Aorta (tissue), 5 donors: ENCODE measurements at regions of chr2 and their contacts with region 1.

Region 1: GRCh38 chr2:231604685-231605606 is 12.3 kb downstream of the TEX44 start:
- DNase-seq: peak; percentile 99 to 100
- ATAC-seq: peak; percentile 95
- H3K4me3 ChIP-seq: peak overlapping the region in 1 of 2 donors; percentile 16
- H3K27ac ChIP-seq: peak overlapping the region; percentile 95 to 97
- H3K4me1 ChIP-seq: no peaks in the 10 kb centered on the region
- H3K27me3 ChIP-seq: no peaks in the 10 kb centered on the region

Region 2: GRCh38 chr2:231514951-231515297 is 90.0 kb before region 1 on chr2:
- intact Hi-C with region 1: loop called (anchors 5 kb)
- DNase-seq: peak in 1 of 2 donors; percentile 3
- ATAC-seq: no peak
- H3K4me3 ChIP-seq: peak overlapping the region; percentile 59 to 71
- H3K27ac ChIP-seq: peak overlapping the region in 1 of 2 donors; percentile 68
- H3K4me1 ChIP-seq: no peaks in the 10 kb centered on the region
- H3K27me3 ChIP-seq: no peaks in the 10 kb centered on the region

Region 3: DNA sequence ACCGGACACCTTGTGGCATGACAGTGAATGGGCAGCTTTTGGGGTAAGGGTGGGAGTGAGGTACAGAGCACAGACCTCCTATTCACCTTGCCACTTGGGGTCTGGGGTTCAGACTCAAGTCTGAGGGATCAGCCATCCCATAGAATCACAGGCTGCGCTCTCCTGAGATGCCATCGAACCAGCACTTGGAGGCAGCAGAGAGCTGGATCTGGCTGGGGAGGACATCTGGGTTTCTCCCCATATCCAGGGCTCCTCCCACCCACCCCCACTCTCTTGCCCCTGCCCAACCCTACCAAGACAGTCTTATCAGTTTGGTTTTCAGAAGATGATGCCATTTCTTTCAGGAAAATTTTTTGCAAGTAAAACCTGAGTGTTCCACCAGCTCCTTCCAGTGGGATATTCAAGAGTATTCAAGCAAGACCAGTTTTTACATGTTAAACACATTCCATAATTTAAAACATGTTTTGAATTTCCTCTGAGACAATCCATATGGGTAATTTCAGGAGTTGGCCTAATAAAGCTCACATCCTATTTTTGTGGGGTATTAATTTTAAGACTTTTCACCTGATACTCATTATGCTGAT is 41.5 kb before region 1 on chr2:
- intact Hi-C with region 1: loop called (anchors 1 to 2 kb)
- DNase-seq: peak; percentile 60 to 79
- ATAC-seq: peak; percentile 46
- H3K4me3 ChIP-seq: no peak overlapping the region
- H3K27ac ChIP-seq: no peak overlapping the region
- H3K4me1 ChIP-seq: no peaks in the 10 kb centered on the region
- H3K27me3 ChIP-seq: no peaks in the 10 kb centered on the region

Region 4: DNA sequence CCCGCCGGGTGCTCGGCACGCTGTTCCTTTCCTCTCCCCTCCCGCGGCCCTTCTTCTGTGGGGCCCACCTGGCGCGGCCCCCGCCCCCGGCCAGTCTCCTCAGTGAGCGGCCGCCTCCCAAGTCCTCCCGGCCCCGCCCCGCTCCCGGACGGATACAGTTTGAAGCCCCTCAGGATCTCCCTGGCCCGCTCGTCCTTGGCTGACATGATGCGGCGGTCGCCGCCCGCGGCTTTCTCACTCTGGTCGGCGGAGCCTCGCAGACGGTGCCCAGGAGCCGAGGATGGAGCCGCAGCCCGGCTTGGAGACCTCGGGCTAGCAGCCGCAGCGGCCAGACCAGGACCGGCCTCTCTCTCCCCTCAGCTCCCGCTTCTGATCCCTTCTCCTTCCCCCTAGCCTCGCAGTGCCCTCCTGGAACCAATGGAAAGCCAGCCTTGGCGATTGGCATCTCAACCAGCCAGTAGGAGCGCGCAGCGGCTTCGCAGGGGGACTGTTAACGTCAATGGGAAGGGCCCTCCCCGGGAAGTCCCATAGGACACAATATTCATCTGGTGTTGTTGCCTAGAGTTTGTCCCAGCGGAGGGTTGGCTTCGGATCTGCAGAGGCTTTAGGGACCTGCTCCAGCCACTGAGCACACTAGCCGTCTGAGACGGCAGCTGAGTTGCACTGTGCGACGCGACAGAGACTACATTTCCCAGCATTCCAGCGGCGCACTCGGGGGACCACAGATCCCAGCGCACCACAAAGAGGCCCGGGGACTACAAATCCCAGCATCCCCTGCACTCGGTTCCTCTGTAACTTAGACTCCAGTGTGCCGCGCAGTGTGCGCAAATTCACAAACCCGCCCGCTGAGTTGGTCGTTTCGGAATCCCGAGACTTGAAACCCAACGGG is 176.2 kb after region 1 on chr2 and contains the start of gene PDE6D:
- intact Hi-C with region 1: loop called (anchors 5 to 10 kb)
- DNase-seq: peak; percentile 99
- ATAC-seq: peak; percentile 98
- H3K4me3 ChIP-seq: peak within 1 kb of the TSS; percentile 86 to 93
- H3K27ac ChIP-seq: peak within 1 kb of the TSS in 1 of 2 donors; percentile 81
- H3K4me1 ChIP-seq: peaks cover 2 to 5% of the 10 kb centered on the region in 2 donors
- H3K27me3 ChIP-seq: no peaks in the 10 kb centered on the region
- total RNA-seq, gene PDE6D: 23.4 to 26.2 TPM